ENCODE measurements at regions of chr20 and their contacts with region 1.

Region 1: GRCh38 chr20:38893565-38894090 is 32.6 kb upstream of the FAM83D start:
- DNase-seq: peak; percentile 72 to 91 (median 81)
- ATAC-seq: peak; percentile 80
- H3K4me3 ChIP-seq: peak overlapping the region in 1 of 2 experiments; percentile 22
- H3K4me3 Mint-ChIP-seq: peak overlapping the region; percentile 69
- H3K27ac ChIP-seq: peak overlapping the region; percentile 29 to 82
- H3K27ac Mint-ChIP-seq: peak overlapping the region; percentile 91
- H3K4me1 ChIP-seq: peaks cover 10% of the 10 kb centered on the region
- H3K4me1 Mint-ChIP-seq: peaks cover 31% of the 10 kb centered on the region
- H3K27me3 ChIP-seq: no peaks in the 10 kb centered on the region
- H3K27me3 Mint-ChIP-seq: no peaks in the 10 kb centered on the region
- CTCF ChIP-seq: peak; percentile 85

Region 2: DNA sequence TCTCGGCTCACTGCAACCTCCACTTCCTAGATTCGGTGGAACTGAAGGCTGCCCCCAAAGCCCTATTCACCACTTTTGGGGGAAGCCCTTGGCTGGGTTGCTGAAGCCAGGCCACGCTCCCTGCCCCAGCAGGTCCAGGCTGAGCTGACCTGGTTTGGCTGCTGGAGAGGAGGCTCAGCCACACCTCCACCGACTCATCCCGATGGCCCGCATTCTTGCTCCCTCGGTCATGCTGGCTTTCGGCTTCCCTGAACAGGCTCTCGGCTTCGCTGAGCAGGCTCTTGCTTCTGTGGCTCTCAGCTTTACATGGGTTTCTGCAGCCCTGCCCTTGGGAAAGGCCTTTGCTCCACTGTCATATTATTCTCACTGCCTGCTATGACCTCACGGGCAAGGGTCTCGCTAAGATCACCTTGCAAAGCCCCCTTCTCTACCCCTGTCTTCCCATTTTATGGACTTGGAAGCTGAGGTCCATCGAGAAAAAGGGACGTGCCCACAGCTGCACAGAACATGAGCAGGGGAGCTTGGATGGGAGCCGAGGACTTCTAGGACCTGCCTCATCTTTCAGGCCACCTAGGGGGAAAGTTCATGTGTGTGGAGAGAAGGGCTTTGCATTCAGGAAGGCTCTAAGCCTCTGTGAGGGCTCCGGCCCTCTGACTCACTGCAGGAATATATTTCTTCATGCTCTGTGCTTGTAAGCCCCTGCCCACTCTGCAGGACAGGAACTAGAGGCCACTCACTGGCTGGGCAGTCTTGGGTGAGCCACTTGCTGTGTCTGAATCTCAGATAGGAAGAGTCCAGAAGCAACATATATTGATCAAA is 276.4 kb before region 1 on chr20:
- CTCF ChIA-PET with region 1: no interaction called
- POLR2A ChIA-PET with region 1: no interaction called
- intact Hi-C with region 1: no loop called
- DNase-seq: no peak
- ATAC-seq: no peak
- H3K4me3 ChIP-seq: no peak overlapping the region
- H3K4me3 Mint-ChIP-seq: no peak overlapping the region
- H3K27ac ChIP-seq: no peak overlapping the region
- H3K27ac Mint-ChIP-seq: no peak overlapping the region
- H3K4me1 ChIP-seq: no peaks in the 10 kb centered on the region
- H3K4me1 Mint-ChIP-seq: no peaks in the 10 kb centered on the region
- H3K27me3 ChIP-seq: peaks cover 0 to 4% of the 10 kb centered on the region in 2 experiments
- H3K27me3 Mint-ChIP-seq: peaks cover 30% of the 10 kb centered on the region
- CTCF ChIP-seq: no peak

Region 3: GRCh38 chr20:38645980-38646858 is 247.4 kb before region 1 on chr20:
- CTCF ChIA-PET with region 1: interaction called, 8 read pairs
- POLR2A ChIA-PET with region 1: no interaction called
- intact Hi-C with region 1: loop called (anchors 1 kb)
- DNase-seq: peak; percentile 83 to 97 (median 91)
- ATAC-seq: peak; percentile 99
- H3K4me3 ChIP-seq: peak overlapping the region; percentile 13 to 25
- H3K4me3 Mint-ChIP-seq: peak overlapping the region; percentile 76
- H3K27ac ChIP-seq: no peak overlapping the region
- H3K27ac Mint-ChIP-seq: peak overlapping the region; percentile 28
- H3K4me1 ChIP-seq: peaks cover 4% of the 10 kb centered on the region
- H3K4me1 Mint-ChIP-seq: peaks cover 8% of the 10 kb centered on the region
- H3K27me3 ChIP-seq: peaks cover 8 to 11% of the 10 kb centered on the region in 2 experiments
- H3K27me3 Mint-ChIP-seq: peaks cover 30% of the 10 kb centered on the region
- CTCF ChIP-seq: peak; percentile 84

Region 4: GRCh38 chr20:38764567-38765355 is 128.9 kb before region 1 on chr20:
- CTCF ChIA-PET with region 1: interaction called, 7 read pairs
- POLR2A ChIA-PET with region 1: no interaction called
- intact Hi-C with region 1: loop called in 1 of 2 experiments (anchors 5 kb)
- DNase-seq: peak in 3 of 9 experiments; percentile 11 to 20 (median 19)
- ATAC-seq: no peak
- H3K4me3 ChIP-seq: no peak overlapping the region
- H3K4me3 Mint-ChIP-seq: no peak overlapping the region
- H3K27ac ChIP-seq: no peak overlapping the region
- H3K27ac Mint-ChIP-seq: no peak overlapping the region
- H3K4me1 ChIP-seq: no peaks in the 10 kb centered on the region
- H3K4me1 Mint-ChIP-seq: no peaks in the 10 kb centered on the region
- H3K27me3 ChIP-seq: no peaks in the 10 kb centered on the region
- H3K27me3 Mint-ChIP-seq: no peaks in the 10 kb centered on the region
- CTCF ChIP-seq: no peak

Region 5: DNA sequence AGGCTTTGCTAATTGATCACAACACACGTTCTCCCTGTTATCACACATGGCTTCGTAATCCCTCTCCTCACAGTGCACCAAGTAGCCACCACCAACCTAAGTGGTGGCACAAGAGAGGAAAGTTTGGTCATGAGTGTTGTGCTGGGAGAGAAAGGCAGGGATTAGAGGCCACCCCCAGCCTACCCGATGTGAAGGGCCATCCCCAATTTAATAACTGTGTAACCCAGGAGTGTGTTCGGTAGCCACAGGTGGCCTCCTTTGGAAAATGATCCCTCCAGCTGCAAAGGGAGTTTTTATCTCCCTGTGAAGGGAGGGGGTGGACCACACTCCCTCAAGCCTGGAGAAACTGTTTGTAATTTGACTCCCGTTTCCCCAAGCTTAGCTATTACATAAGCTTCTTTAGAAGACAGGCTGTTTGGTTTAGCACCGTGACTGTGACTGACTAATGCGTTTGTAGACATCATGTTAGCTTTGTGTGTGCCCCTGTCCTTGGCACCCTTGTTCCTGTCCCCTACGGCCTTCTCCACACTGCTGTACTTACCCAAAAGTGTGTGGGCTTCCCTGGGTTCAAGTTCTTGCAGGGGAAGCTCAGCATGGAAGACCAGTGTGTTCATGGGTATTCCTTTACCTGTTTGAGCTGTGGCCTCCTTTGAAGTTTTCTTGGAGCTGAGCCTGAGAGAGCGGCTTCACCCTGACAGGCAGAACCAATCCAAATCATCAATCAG is 67.6 kb before region 1 on chr20:
- CTCF ChIA-PET with region 1: no interaction called
- POLR2A ChIA-PET with region 1: no interaction called
- intact Hi-C with region 1: loop called in 1 of 2 experiments (anchors 5 kb)
- DNase-seq: no peak
- ATAC-seq: no peak
- H3K4me3 ChIP-seq: no peak overlapping the region
- H3K4me3 Mint-ChIP-seq: no peak overlapping the region
- H3K27ac ChIP-seq: peak overlapping the region in 1 of 2 experiments; percentile 11
- H3K27ac Mint-ChIP-seq: no peak overlapping the region
- H3K4me1 ChIP-seq: peaks cover 27% of the 10 kb centered on the region
- H3K4me1 Mint-ChIP-seq: peaks cover 72% of the 10 kb centered on the region
- H3K27me3 ChIP-seq: no peaks in the 10 kb centered on the region
- H3K27me3 Mint-ChIP-seq: no peaks in the 10 kb centered on the region
- CTCF ChIP-seq: no peak

Region 6: GRCh38 chr20:38875175-38875993 is 18.2 kb before region 1 on chr20:
- CTCF ChIA-PET with region 1: interaction called, 57 read pairs
- POLR2A ChIA-PET with region 1: interaction called, 12 read pairs
- intact Hi-C with region 1: loop called (anchors 1 kb)
- DNase-seq: peak; percentile 53 to 93 (median 78)
- ATAC-seq: peak; percentile 51
- H3K4me3 ChIP-seq: peak overlapping the region; percentile 21 to 32
- H3K4me3 Mint-ChIP-seq: peak overlapping the region; percentile 82
- H3K27ac ChIP-seq: peak overlapping the region; percentile 61 to 87
- H3K27ac Mint-ChIP-seq: peak overlapping the region; percentile 98
- H3K4me1 ChIP-seq: peaks cover 59% of the 10 kb centered on the region
- H3K4me1 Mint-ChIP-seq: peaks cover 90% of the 10 kb centered on the region
- H3K27me3 ChIP-seq: no peaks in the 10 kb centered on the region
- H3K27me3 Mint-ChIP-seq: no peaks in the 10 kb centered on the region
- CTCF ChIP-seq: no peak